Activated CD4-positive, alpha-beta memory T cell treated with anti-CD3 and anti-CD28 coated beads for 36 hours (primary cell): ENCODE measurements at regions of chr10 and their contacts with region 1.

Region 1: GRCh38 chr10:7260412-7260900 is 150.4 kb downstream of the SFMBT2 start:
- DNase-seq: no peak
- H3K4me3 Mint-ChIP-seq: no peak overlapping the region
- H3K27ac Mint-ChIP-seq: peak overlapping the region; percentile 26
- H3K4me1 Mint-ChIP-seq: peaks cover 57% of the 10 kb centered on the region
- H3K27me3 Mint-ChIP-seq: no peaks in the 10 kb centered on the region

Region 2: GRCh38 chr10:5975641-5976473 is 1284.6 kb before region 1 on chr10:
- CTCF ChIA-PET with region 1: no interaction called
- POLR2A ChIA-PET with region 1: no interaction called
- intact Hi-C with region 1: no loop called
- DNase-seq: peak; percentile 85
- H3K4me3 Mint-ChIP-seq: peak overlapping the region; percentile 91
- H3K27ac Mint-ChIP-seq: peak overlapping the region; percentile 93
- H3K4me1 Mint-ChIP-seq: peaks cover 44% of the 10 kb centered on the region
- H3K27me3 Mint-ChIP-seq: no peaks in the 10 kb centered on the region

Region 3: DNA sequence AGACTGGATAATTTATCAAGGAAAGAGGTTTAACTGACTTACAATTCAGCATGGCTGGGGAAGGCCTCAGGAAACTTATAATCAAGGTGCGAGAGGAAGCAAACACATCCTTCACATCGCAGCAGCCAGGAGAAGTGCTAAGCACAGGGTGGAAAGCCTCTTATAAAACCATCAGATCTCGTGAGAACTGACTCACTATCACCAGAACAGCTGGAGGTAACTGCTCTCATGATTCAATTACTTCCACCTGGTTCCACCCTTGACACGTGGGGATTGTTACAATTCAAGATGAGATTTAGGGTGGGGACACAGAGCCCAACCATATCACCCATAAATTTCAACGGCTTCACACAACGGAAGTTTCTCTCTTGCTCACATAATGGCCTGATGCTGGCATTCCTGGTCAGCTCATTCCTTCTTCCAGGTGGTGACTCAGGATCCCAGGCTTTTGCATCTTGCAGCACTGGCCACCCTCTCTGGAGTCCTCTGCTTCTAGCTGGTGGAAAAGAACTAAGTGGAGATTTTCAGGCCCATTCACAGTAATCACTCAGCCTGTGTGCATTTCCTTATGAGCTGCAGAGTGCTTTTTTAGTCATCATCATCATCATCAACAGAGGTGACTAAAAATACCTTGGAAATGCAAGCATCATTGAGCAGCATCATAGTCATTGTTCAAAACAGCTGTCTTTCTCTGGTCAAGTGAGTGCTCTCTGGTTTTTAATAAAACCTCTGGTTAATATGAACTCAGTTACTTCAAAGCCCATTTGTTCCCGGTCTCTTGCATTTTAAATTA is 157.7 kb before region 1 on chr10:
- CTCF ChIA-PET with region 1: no interaction called
- POLR2A ChIA-PET with region 1: no interaction called
- intact Hi-C with region 1: no loop called
- DNase-seq: no peak
- H3K4me3 Mint-ChIP-seq: no peak overlapping the region
- H3K27ac Mint-ChIP-seq: no peak overlapping the region
- H3K4me1 Mint-ChIP-seq: peaks cover 9% of the 10 kb centered on the region
- H3K27me3 Mint-ChIP-seq: peaks cover 2% of the 10 kb centered on the region

Region 4: DNA sequence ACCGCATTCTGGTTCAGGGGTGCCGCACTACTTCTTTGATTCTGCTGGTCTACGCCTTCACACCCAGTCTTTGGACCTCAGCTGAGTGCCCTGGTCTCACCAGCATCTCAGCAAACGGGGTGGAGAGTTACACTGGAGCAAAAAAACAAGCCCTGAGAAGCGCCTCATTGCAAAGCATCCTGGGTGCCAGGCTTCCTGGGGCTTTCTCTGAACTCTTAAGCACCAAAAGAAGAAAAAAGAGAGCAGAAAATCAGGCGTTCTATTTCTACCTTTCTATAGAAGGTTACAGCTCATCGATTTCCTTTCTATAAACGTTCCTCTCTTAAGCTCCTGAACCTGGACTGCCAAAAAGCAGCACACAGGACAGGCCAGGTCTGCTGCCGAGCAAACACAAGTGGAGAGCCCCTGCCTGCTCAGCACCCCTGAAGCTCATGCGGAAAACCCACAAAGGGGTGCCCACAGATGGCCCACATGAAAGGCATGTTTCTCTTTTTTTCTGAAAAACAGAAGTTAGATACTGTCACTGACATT is 67.6 kb before region 1 on chr10:
- CTCF ChIA-PET with region 1: no interaction called
- POLR2A ChIA-PET with region 1: no interaction called
- intact Hi-C with region 1: loop called (anchors 5 kb)
- DNase-seq: peak; percentile 77
- H3K4me3 Mint-ChIP-seq: peak overlapping the region; percentile 61
- H3K27ac Mint-ChIP-seq: peak overlapping the region; percentile 95
- H3K4me1 Mint-ChIP-seq: peaks cover 54% of the 10 kb centered on the region
- H3K27me3 Mint-ChIP-seq: no peaks in the 10 kb centered on the region

Region 5: DNA sequence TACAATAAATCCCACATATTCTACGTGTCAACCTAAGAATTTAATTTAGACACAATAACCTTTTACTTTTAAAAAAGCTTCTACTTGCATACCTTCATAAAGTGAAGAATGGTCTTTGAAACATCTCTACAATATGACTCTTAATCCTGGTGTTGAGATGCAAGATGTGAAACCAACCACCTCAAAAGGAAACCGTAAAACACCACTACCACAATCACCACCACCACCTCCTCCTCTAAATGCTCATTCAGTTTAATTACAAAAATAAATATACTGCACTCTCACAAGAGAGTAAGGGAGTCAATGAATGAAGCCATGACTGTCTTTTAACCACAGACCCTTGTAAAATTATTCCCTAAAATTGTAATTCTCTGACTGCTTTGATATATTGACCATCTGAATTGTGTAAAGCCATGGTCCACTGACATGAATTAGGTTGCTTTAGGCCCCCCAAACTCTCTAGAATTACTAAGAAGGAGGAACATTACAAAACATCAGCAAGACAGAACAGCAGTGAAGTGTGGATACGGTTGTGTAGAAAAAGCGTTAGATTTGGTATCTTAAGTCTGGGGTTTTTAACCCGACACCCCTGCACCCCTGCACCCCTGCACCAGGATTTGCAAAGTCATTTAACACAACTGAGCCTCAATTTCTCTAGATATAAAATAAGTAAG is 21.0 kb before region 1 on chr10:
- CTCF ChIA-PET with region 1: no interaction called
- POLR2A ChIA-PET with region 1: no interaction called
- intact Hi-C with region 1: loop called (anchors 1 kb)
- DNase-seq: peak; percentile 62
- H3K4me3 Mint-ChIP-seq: no peak overlapping the region
- H3K27ac Mint-ChIP-seq: no peak overlapping the region
- H3K4me1 Mint-ChIP-seq: peaks cover 34% of the 10 kb centered on the region
- H3K27me3 Mint-ChIP-seq: no peaks in the 10 kb centered on the region

Region 6: DNA sequence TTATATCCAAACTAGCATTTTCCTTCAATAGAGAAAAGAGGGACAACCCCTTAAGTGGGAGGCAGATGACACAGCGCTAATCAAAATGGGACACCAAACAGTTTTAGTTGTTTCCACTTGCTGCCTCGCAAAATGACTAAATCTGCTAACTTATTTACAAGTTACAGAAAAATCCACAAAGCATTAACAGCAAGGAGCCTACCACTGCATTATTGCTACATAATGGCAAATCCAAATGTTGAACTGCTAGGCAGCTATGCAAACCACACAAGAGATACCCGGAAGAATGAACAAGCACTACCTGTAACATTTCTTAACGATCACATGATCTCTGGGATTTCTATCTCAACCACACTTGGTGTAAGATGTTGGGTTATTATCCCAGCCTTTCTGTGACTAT is 53.7 kb after region 1 on chr10:
- CTCF ChIA-PET with region 1: no interaction called
- POLR2A ChIA-PET with region 1: no interaction called
- intact Hi-C with region 1: loop called (anchors 1 kb)
- DNase-seq: peak; percentile 52
- H3K4me3 Mint-ChIP-seq: peak overlapping the region; percentile 8
- H3K27ac Mint-ChIP-seq: peak overlapping the region; percentile 47
- H3K4me1 Mint-ChIP-seq: peaks cover 53% of the 10 kb centered on the region
- H3K27me3 Mint-ChIP-seq: no peaks in the 10 kb centered on the region